Activated naive CD8-positive, alpha-beta T cell treated with anti-CD3 and anti-CD28 coated beads, Interleukin-2, amount 10 ng/mL, durations not matched to agents 7 days and 5 days (primary cell): ENCODE measurements at regions of chr14 and their contacts with region 1.

Region 1: GRCh38 chr14:24108336-24108874 is 6.2 kb upstream of the DCAF11 start:
- DNase-seq: no peak
- ATAC-seq: peak; percentile 35
- H3K4me3 Mint-ChIP-seq: peak overlapping the region; percentile 60
- H3K27ac Mint-ChIP-seq: peak overlapping the region; percentile 96
- H3K4me1 Mint-ChIP-seq: peaks cover 31% of the 10 kb centered on the region
- H3K27me3 Mint-ChIP-seq: no peaks in the 10 kb centered on the region

Region 2: DNA sequence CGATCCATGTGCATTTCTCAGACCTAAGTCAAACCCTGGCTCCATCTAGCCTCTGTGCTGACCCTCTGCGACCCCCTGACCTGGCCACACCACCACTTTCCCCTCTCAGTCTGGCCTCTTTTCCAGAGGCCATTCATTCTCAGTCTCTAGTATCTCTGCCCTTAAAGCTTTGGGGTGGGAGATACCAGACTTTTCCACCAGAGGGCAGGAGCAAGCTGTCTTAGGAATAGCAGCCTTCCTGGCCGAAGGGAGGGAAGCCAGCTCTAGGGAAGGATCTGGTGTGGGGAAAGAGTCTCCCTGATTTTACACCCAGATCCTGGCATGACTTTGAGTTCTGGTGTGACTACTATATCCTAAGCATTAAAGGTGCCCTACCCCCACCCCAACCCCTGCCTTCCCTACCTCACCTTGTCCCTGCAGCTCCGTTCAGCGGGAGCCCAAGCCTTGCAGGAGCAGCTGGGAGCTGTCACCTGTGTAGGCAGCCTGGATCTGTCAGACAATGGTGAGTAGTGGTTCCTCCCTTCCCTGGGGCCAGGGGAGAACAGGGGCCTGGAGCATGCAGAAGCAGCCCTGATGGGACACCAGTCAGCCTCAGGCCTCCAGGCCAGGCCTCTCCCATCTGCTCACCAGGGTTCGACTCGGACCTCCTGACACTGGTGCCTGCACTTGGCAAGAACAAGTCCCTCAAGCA is 50.0 kb before region 1 on chr14:
- POLR2A ChIA-PET with region 1: interaction called, 35 read pairs
- DNase-seq: no peak
- ATAC-seq: peak; percentile 63
- H3K4me3 Mint-ChIP-seq: no peak overlapping the region
- H3K27ac Mint-ChIP-seq: peak overlapping the region; percentile 78
- H3K4me1 Mint-ChIP-seq: peaks cover 2% of the 10 kb centered on the region
- H3K27me3 Mint-ChIP-seq: peaks cover 2% of the 10 kb centered on the region

Region 3: GRCh38 chr14:24080888-24081738 is 27.3 kb before region 1 on chr14:
- POLR2A ChIA-PET with region 1: interaction called, 27 read pairs
- DNase-seq: peak; percentile 86
- ATAC-seq: peak; percentile 93
- H3K4me3 Mint-ChIP-seq: peak overlapping the region; percentile 80
- H3K27ac Mint-ChIP-seq: peak overlapping the region; percentile 87
- H3K4me1 Mint-ChIP-seq: peaks cover 21% of the 10 kb centered on the region
- H3K27me3 Mint-ChIP-seq: no peaks in the 10 kb centered on the region

Region 4: GRCh38 chr14:24093901-24094761 is 14.3 kb before region 1 on chr14 and contains the start of gene PCK2:
- POLR2A ChIA-PET with region 1: interaction called, 116 read pairs
- DNase-seq: peak; percentile 83
- ATAC-seq: peak; percentile 77
- H3K4me3 Mint-ChIP-seq: peak within 1 kb of the TSS; percentile 95
- H3K27ac Mint-ChIP-seq: peak within 1 kb of the TSS; percentile 97
- H3K4me1 Mint-ChIP-seq: peaks cover 29% of the 10 kb centered on the region
- H3K27me3 Mint-ChIP-seq: no peaks in the 10 kb centered on the region
- total RNA-seq, gene PCK2: 47.4 to 50.6 TPM

Region 5: GRCh38 chr14:24122898-24123297 is 14.5 kb after region 1 on chr14:
- POLR2A ChIA-PET with region 1: no interaction called
- DNase-seq: no peak
- ATAC-seq: no peak
- H3K4me3 Mint-ChIP-seq: no peak overlapping the region
- H3K27ac Mint-ChIP-seq: no peak overlapping the region
- H3K4me1 Mint-ChIP-seq: peaks cover 11% of the 10 kb centered on the region
- H3K27me3 Mint-ChIP-seq: no peaks in the 10 kb centered on the region

Region 6: GRCh38 chr14:24135834-24136542 is 27.6 kb after region 1 on chr14 and contains the start of gene PSME1:
- POLR2A ChIA-PET with region 1: interaction called, 176 read pairs
- DNase-seq: peak; percentile 97
- ATAC-seq: peak; percentile 87
- H3K4me3 Mint-ChIP-seq: peak within 1 kb of the TSS; percentile 96
- H3K27ac Mint-ChIP-seq: peak within 1 kb of the TSS; percentile 94
- H3K4me1 Mint-ChIP-seq: peaks cover 51% of the 10 kb centered on the region
- H3K27me3 Mint-ChIP-seq: no peaks in the 10 kb centered on the region
- total RNA-seq, gene PSME1: 430 to 443 TPM

Region 7: DNA sequence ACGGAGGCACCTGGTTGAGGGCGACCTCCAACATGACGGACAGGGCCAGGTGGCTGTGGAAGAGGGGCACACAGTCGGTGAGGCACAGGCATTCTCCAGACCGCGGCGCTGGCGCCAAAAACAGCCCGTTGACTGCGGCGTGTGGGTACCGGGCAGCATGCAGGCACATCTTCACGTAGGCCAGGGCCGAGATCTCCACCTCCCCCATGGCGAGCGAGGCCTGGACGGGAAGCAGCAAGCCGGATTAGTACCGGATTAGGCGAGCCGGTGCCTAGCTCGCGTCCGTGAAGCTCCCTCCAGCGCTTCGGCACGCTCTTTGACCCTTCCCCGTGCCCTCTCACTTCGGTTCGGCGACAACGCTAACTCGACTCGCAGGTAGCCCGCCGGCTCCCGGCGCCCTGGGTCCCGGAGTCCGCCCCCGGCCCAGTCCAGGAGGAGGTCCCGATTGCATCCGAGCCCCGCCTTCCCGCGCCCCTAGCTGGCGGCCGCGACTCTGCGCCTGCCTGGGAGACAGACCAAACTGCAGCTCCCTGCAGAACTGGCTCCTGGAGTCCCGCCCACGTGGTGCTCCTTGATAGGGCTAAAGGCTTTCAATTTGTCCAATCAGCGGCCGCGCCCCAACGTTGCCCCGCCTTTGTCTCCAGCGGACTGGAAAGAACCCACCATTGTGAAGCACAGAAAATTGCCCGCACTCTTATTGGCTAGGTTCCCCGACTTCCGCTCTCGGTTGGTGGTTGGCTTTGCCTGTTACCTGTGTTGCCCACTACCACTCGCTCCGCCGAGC is 32.9 kb after region 1 on chr14 and contains the start of gene EMC9:
- POLR2A ChIA-PET with region 1: interaction called, 176 read pairs
- DNase-seq: peak; percentile 96
- ATAC-seq: peak; percentile 91
- H3K4me3 Mint-ChIP-seq: peak within 1 kb of the TSS; percentile 100
- H3K27ac Mint-ChIP-seq: peak within 1 kb of the TSS; percentile 98
- H3K4me1 Mint-ChIP-seq: peaks cover 63% of the 10 kb centered on the region
- H3K27me3 Mint-ChIP-seq: no peaks in the 10 kb centered on the region
- total RNA-seq, gene EMC9: 41.6 to 43.9 TPM

Region 8: GRCh38 chr14:24146978-24147760 is 38.8 kb after region 1 on chr14 and contains the start of gene RNF31:
- POLR2A ChIA-PET with region 1: interaction called, 80 read pairs
- DNase-seq: peak; percentile 95
- ATAC-seq: peak; percentile 82
- H3K4me3 Mint-ChIP-seq: peak within 1 kb of the TSS; percentile 94
- H3K27ac Mint-ChIP-seq: peak within 1 kb of the TSS; percentile 96
- H3K4me1 Mint-ChIP-seq: peaks cover 54% of the 10 kb centered on the region
- H3K27me3 Mint-ChIP-seq: no peaks in the 10 kb centered on the region
- total RNA-seq, gene RNF31: 131 to 153 TPM